ENCODE measurements at regions of chr2 and their contacts with region 1.

Region 1: GRCh38 chr2:86764661-86765307 is 25.9 kb downstream of the CD8A start:
- DNase-seq: peak; percentile 44
- H3K4me3 Mint-ChIP-seq: no peak overlapping the region
- H3K27ac Mint-ChIP-seq: no peak overlapping the region
- H3K4me1 Mint-ChIP-seq: peaks cover 19% of the 10 kb centered on the region
- H3K27me3 Mint-ChIP-seq: no peaks in the 10 kb centered on the region

Region 2: DNA sequence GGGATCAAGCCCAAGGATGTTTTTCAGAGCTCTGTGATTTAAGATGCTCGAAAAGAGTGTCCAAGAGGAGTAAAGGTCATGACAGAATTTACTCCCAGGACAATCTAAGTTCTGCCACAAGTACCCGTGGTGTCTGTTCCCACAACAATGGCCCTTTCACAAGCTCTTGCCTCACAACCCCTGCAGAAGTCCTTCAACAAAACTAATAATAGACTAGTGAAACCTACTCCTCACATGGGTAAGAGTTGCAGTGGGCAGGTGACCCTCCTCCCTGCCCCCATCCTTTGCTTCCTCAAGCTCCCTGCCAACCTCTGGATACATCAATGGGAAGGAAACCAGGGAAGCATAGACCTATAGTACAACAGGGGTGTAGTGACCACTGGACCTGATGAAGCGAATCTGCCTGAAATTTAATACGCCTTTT is 623.8 kb before region 1 on chr2:
- CTCF ChIA-PET with region 1: no interaction called
- intact Hi-C with region 1: no loop called
- DNase-seq: no peak
- H3K4me3 Mint-ChIP-seq: no peak overlapping the region
- H3K27ac Mint-ChIP-seq: peak overlapping the region; percentile 41
- H3K4me1 Mint-ChIP-seq: peaks cover 4% of the 10 kb centered on the region
- H3K27me3 Mint-ChIP-seq: no peaks in the 10 kb centered on the region

Region 3: DNA sequence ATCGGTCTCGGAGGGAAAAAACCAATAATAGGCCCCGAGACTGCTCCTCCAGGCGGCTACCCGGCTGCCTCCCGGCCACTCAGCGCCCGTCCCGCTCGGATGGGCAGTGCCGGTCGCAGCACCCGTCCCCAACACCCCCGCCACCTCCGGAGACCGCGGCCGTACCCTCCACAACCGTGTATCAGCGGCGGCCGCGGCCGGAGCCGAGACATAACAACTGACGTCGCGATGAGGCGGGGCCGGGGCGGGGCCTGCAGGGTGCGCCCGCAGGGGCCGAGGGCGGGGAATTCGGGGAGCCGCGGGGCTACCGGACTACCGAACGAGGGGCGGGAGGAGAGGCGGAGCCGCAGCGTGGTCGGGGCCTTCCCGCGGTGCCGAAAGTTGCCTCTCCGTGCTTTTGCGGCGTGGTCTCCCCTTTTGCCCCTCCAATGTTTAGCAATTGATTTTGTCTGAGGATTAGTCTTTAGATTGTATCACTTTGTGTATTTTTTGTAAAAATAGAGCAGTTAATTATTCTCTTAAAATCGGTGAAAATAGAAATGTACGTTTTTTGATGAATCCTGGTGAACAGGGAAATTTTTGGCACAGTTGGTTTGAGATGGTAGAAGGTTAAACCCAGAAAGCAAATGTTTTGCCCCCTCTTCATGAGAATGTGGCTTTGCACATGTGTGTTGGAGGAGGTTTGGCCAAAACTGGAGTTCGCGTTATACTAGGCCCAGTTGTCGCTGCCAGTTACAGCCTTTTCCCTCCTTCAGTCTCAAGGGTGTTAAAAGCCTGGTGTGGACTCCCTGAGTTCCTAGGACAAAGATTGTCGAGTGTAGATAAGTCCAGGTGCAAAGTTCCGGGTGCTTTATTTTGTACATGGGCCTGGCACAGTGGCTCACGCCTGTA is 140.9 kb before region 1 on chr2 and contains the start of gene RNF103:
- CTCF ChIA-PET with region 1: no interaction called
- intact Hi-C with region 1: no loop called
- DNase-seq: peak; percentile 94
- H3K4me3 Mint-ChIP-seq: peak within 1 kb of the TSS; percentile 92
- H3K27ac Mint-ChIP-seq: peak within 1 kb of the TSS; percentile 93
- H3K4me1 Mint-ChIP-seq: peaks cover 18% of the 10 kb centered on the region
- H3K27me3 Mint-ChIP-seq: peaks cover 4% of the 10 kb centered on the region
- total RNA-seq, gene RNF103: 10.7 to 11.8 TPM

Region 4: DNA sequence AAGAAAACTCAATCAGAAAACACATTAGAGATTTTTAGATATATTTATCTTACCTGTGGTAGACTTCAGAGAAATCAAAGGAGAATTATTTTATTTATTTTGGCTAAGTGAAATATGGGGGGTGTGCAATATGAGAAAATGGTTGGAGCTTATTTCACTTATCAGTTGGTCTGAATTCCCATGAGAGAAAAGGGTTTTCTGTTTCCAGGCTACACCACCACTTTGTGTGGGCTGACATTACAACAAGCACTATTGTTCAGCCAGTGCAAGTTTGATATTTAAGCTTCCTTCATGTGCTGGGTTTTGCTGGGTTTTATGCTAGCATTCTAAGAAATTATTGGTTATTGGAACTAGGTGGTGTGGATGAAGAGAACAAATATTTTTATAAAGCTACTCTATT is 11.2 kb before region 1 on chr2:
- CTCF ChIA-PET with region 1: interaction called, 14 read pairs
- intact Hi-C with region 1: no loop called
- DNase-seq: no peak
- H3K4me3 Mint-ChIP-seq: no peak overlapping the region
- H3K27ac Mint-ChIP-seq: no peak overlapping the region
- H3K4me1 Mint-ChIP-seq: peaks cover 8% of the 10 kb centered on the region
- H3K27me3 Mint-ChIP-seq: no peaks in the 10 kb centered on the region